ENCODE measurements at regions of chr10 and their contacts with region 1.

Region 1: GRCh38 chr10:74189999-74190421 is 39.0 kb downstream of the ADK start:
- DNase-seq: peak; percentile 49
- H3K4me3 Mint-ChIP-seq: peak overlapping the region; percentile 58
- H3K27ac Mint-ChIP-seq: peak overlapping the region; percentile 88
- H3K4me1 Mint-ChIP-seq: peaks cover 57% of the 10 kb centered on the region
- H3K27me3 Mint-ChIP-seq: no peaks in the 10 kb centered on the region

Region 2: DNA sequence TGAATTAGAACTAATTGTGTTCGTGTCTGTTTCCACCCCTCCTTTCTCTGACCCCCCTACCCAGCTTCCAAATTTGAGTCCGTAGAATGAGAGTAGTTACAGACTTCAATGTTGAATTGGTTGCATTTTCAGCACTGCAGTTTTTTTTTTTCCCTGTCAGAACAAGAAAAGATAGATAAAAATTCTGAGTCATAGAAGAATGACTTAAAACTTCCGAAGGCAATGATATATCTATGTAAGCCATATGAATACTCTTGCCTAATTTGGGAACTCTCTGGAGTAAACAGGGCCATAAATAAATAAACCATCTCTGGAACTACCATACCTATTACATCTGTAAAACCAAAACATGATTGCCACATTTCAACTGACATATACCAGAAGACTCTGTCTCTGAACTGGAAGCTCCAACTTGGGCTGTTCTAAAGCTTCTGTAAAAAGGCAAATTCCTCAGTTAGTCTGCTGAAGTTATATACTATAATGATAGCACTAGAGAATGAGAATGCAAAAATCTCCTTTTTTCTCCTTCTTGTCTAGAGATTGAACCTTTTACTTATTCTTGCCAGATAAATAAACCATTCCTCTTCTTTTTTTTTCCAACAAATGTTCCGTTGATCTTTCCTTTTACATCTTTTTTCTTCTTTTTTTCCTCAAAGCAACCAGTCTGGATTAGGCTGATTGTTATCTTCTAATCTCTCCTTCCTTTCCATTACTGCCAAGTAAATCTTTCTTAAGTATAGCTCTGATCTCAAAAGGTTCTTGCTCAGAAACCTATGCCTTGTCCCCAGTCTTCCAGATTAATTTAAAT is 168.6 kb before region 1 on chr10:
- CTCF ChIA-PET with region 1: no interaction called
- intact Hi-C with region 1: no loop called
- DNase-seq: no peak
- H3K4me3 Mint-ChIP-seq: no peak overlapping the region
- H3K27ac Mint-ChIP-seq: no peak overlapping the region
- H3K4me1 Mint-ChIP-seq: peaks cover 26% of the 10 kb centered on the region
- H3K27me3 Mint-ChIP-seq: no peaks in the 10 kb centered on the region

Region 3: GRCh38 chr10:74176380-74177139 is 13.4 kb before region 1 on chr10:
- CTCF ChIA-PET with region 1: interaction called, 3 read pairs
- intact Hi-C with region 1: loop called (anchors 1 kb)
- DNase-seq: peak; percentile 96
- H3K4me3 Mint-ChIP-seq: peak overlapping the region; percentile 90
- H3K27ac Mint-ChIP-seq: peak overlapping the region; percentile 93
- H3K4me1 Mint-ChIP-seq: peaks cover 32% of the 10 kb centered on the region
- H3K27me3 Mint-ChIP-seq: no peaks in the 10 kb centered on the region

Measured in activated naive CD4-positive, alpha-beta T cell treated with anti-CD3 and anti-CD28 coated beads for 36 hours (primary cell).